CD8-positive, alpha-beta T cell (primary cell): ENCODE measurements at regions of chr1 and their contacts with region 1.

Region 1: GRCh38 chr1:110338886-110339406 is at the start of gene RBM15:
- DNase-seq: peak; percentile 92 to 100 (median 96)
- ATAC-seq: peak; percentile 74
- H3K4me3 ChIP-seq: peak within 1 kb of the TSS; percentile 91 to 97
- H3K4me3 Mint-ChIP-seq: no peak within 1 kb of the TSS
- H3K27ac ChIP-seq: peak within 1 kb of the TSS; percentile 87 to 98
- H3K27ac Mint-ChIP-seq: no peak within 1 kb of the TSS
- H3K4me1 ChIP-seq: peaks cover 49% of the 10 kb centered on the region
- H3K4me1 Mint-ChIP-seq: peaks cover 56% of the 10 kb centered on the region
- H3K27me3 ChIP-seq: no peaks in the 10 kb centered on the region
- H3K27me3 Mint-ChIP-seq: no peaks in the 10 kb centered on the region
- CTCF ChIP-seq: no peak
- total RNA-seq, gene RBM15: 57.1 to 59.3 TPM

Region 2: DNA sequence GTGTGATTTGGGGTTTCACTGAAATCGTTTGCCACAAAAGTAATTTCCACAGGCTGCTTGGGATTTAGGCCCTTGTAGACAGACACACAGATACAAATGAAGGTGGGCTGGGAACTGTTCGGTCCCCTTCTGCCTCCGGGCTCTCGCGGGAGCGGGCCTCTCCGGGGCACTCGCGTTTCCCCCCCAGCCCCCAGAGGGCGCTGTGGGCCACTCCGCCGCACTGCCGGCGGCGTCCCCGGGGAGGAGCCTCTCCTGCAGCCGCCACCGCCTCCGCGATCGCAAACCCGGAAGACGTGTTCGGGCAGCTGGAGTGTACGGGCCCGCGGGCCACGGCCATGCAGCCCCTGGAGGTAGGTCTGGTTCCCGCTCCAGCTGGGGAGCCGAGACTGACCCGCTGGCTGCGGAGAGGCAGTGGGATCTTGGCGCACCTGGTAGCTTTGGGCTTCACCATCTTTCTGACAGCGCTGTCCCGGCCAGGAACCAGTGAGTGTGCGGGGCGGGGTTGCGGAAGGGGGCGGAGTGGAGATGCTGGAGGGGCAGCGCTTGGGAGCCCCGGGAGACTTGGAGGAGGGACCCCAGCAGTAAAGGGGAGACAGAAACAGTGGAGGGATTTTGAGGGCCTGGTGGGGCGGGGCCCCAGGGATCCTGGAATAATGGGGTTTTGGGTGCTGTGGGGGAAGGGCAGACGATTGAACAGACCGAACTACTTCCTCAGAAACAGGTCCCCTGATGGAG is 845.0 kb before region 1 on chr1 and contains the start of gene CYB561D1:
- CTCF ChIA-PET with region 1: no interaction called
- POLR2A ChIA-PET with region 1: no interaction called
- intact Hi-C with region 1: loop called in 1 of 2 experiments (anchors 2 kb)
- DNase-seq: peak; percentile 79 to 95 (median 88)
- ATAC-seq: peak; percentile 90
- H3K4me3 ChIP-seq: peak within 1 kb of the TSS; percentile 94 to 95
- H3K4me3 Mint-ChIP-seq: peak within 1 kb of the TSS; percentile 95
- H3K27ac ChIP-seq: peak within 1 kb of the TSS; percentile 53 to 58
- H3K27ac Mint-ChIP-seq: peak within 1 kb of the TSS; percentile 85
- H3K4me1 ChIP-seq: peaks cover 49% of the 10 kb centered on the region
- H3K4me1 Mint-ChIP-seq: peaks cover 52% of the 10 kb centered on the region
- H3K27me3 ChIP-seq: no peaks in the 10 kb centered on the region
- H3K27me3 Mint-ChIP-seq: no peaks in the 10 kb centered on the region
- CTCF ChIP-seq: peak; percentile 88
- total RNA-seq, gene CYB561D1: 10.2 to 12.3 TPM

Region 3: GRCh38 chr1:110312188-110313121 is 26.5 kb before region 1 on chr1:
- CTCF ChIA-PET with region 1: interaction called, 53 read pairs
- POLR2A ChIA-PET with region 1: interaction called, 9 read pairs
- intact Hi-C with region 1: no loop called
- DNase-seq: peak; percentile 49 to 85 (median 77)
- ATAC-seq: peak; percentile 99
- H3K4me3 ChIP-seq: no peak overlapping the region
- H3K4me3 Mint-ChIP-seq: no peak overlapping the region
- H3K27ac ChIP-seq: no peak overlapping the region
- H3K27ac Mint-ChIP-seq: no peak overlapping the region
- H3K4me1 ChIP-seq: peaks cover 2% of the 10 kb centered on the region
- H3K4me1 Mint-ChIP-seq: peaks cover 3% of the 10 kb centered on the region
- H3K27me3 ChIP-seq: no peaks in the 10 kb centered on the region
- H3K27me3 Mint-ChIP-seq: no peaks in the 10 kb centered on the region
- CTCF ChIP-seq: peak; percentile 87

Region 4: GRCh38 chr1:110460253-110461220 is 121.6 kb after region 1 on chr1:
- CTCF ChIA-PET with region 1: interaction called, 9 read pairs
- POLR2A ChIA-PET with region 1: interaction called, 5 read pairs
- intact Hi-C with region 1: loop called in 1 of 2 experiments (anchors 2 kb)
- DNase-seq: peak; percentile 74 to 90 (median 83)
- ATAC-seq: peak; percentile 99
- H3K4me3 ChIP-seq: no peak overlapping the region
- H3K4me3 Mint-ChIP-seq: no peak overlapping the region
- H3K27ac ChIP-seq: no peak overlapping the region
- H3K27ac Mint-ChIP-seq: no peak overlapping the region
- H3K4me1 ChIP-seq: no peaks in the 10 kb centered on the region
- H3K4me1 Mint-ChIP-seq: no peaks in the 10 kb centered on the region
- H3K27me3 ChIP-seq: no peaks in the 10 kb centered on the region
- H3K27me3 Mint-ChIP-seq: no peaks in the 10 kb centered on the region
- CTCF ChIP-seq: peak; percentile 98

Region 5: DNA sequence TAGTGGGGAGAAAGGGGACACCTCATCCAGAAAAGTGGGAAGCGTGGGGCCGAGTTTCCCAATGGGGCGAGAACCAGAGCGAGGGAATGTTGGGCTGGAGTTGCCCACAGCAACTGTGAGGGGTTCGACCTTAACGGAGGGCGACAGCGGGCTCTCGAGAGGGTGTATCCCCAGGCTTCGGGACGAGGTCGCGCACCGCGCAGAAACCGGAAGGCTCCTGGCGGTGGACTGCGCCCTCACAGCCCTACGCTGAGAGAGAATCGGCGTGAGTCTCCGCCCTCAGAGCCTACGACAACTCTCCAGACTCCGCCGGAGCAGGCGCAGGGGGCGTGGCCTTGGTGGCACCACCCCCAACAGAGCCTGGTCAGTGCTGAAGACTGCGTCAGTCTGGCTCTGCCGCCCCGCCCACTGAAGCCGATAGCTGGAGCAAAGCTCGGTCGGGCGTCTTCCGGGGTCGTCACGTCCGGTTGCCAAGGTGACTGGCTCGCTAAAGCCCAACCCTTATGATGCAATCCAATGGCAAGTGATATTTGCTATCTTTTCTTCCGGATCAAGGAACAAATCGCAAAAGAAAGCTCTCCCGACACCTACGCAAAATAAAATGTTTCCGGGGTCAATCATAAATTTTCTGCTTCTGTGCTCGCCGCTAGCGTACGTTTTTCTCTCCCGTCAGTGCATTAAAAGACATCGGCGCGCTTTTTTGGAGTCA is 624.9 kb after region 1 on chr1 and contains the start of gene LRIF1:
- CTCF ChIA-PET with region 1: no interaction called
- POLR2A ChIA-PET with region 1: interaction called, 4 read pairs
- intact Hi-C with region 1: loop called (anchors 2 to 10 kb)
- DNase-seq: peak; percentile 98 to 100 (median 100)
- ATAC-seq: peak; percentile 96
- H3K4me3 ChIP-seq: peak within 1 kb of the TSS; percentile 77 to 88
- H3K4me3 Mint-ChIP-seq: peak within 1 kb of the TSS; percentile 84
- H3K27ac ChIP-seq: peak within 1 kb of the TSS; percentile 98 to 99
- H3K27ac Mint-ChIP-seq: peak within 1 kb of the TSS; percentile 99
- H3K4me1 ChIP-seq: peaks cover 21% of the 10 kb centered on the region
- H3K4me1 Mint-ChIP-seq: peaks cover 33% of the 10 kb centered on the region
- H3K27me3 ChIP-seq: peaks cover 0 to 2% of the 10 kb centered on the region in 2 experiments
- H3K27me3 Mint-ChIP-seq: peaks cover 10% of the 10 kb centered on the region
- CTCF ChIP-seq: peak; percentile 59
- total RNA-seq, gene LRIF1: 1.8 to 1.9 TPM

Region 6: GRCh38 chr1:111025109-111025508 is 686.2 kb after region 1 on chr1:
- CTCF ChIA-PET with region 1: no interaction called
- POLR2A ChIA-PET with region 1: no interaction called
- intact Hi-C with region 1: no loop called
- DNase-seq: no peak
- ATAC-seq: no peak
- H3K4me3 ChIP-seq: no peak overlapping the region
- H3K4me3 Mint-ChIP-seq: no peak overlapping the region
- H3K27ac ChIP-seq: no peak overlapping the region
- H3K27ac Mint-ChIP-seq: no peak overlapping the region
- H3K4me1 ChIP-seq: no peaks in the 10 kb centered on the region
- H3K4me1 Mint-ChIP-seq: no peaks in the 10 kb centered on the region
- H3K27me3 ChIP-seq: no peaks in the 10 kb centered on the region
- H3K27me3 Mint-ChIP-seq: peaks cover 15% of the 10 kb centered on the region
- CTCF ChIP-seq: no peak

Region 7: GRCh38 chr1:111755331-111756123 is 1416.6 kb after region 1 on chr1 and contains the start of gene DDX20:
- CTCF ChIA-PET with region 1: no interaction called
- POLR2A ChIA-PET with region 1: no interaction called
- intact Hi-C with region 1: loop called in 1 of 2 experiments (anchors 5 kb)
- DNase-seq: peak; percentile 86 to 97 (median 93)
- ATAC-seq: peak; percentile 89
- H3K4me3 ChIP-seq: peak within 1 kb of the TSS; percentile 75 to 89
- H3K4me3 Mint-ChIP-seq: peak within 1 kb of the TSS; percentile 90
- H3K27ac ChIP-seq: peak within 1 kb of the TSS; percentile 93 to 96
- H3K27ac Mint-ChIP-seq: peak within 1 kb of the TSS; percentile 98
- H3K4me1 ChIP-seq: peaks cover 19% of the 10 kb centered on the region
- H3K4me1 Mint-ChIP-seq: peaks cover 43% of the 10 kb centered on the region
- H3K27me3 ChIP-seq: no peaks in the 10 kb centered on the region
- H3K27me3 Mint-ChIP-seq: no peaks in the 10 kb centered on the region
- CTCF ChIP-seq: peak; percentile 83
- total RNA-seq, gene DDX20: 35.4 to 35.9 TPM